ENCODE measurements at regions of chr1 and their contacts with region 1.

Region 1: GRCh38 chr1:15741183-15741850 is 982 bp upstream of the TMEM82 start:
- DNase-seq: peak; percentile 88
- H3K4me3 ChIP-seq: peak overlapping the region in 1 of 2 experiments; percentile 46; a peak in 1 of 4 replicates
- H3K27ac ChIP-seq: no peak overlapping the region
- H3K4me1 ChIP-seq: peaks cover 0 to 32% of the 10 kb centered on the region in 2 experiments; a peak in 1 of 4 replicates
- H3K27me3 ChIP-seq: no peaks in the 10 kb centered on the region
- CTCF ChIP-seq: peak; percentile 68
- EP300 ChIP-seq: no peak
- RAD21 ChIP-seq: peak; percentile 85

Region 2: GRCh38 chr1:15592285-15592684 is 149.0 kb before region 1 on chr1:
- CTCF ChIA-PET with region 1: interaction called, 14 read pairs
- POLR2A ChIA-PET with region 1: no interaction called
- DNase-seq: no peak
- H3K4me3 ChIP-seq: no peak overlapping the region
- H3K27ac ChIP-seq: no peak overlapping the region
- H3K4me1 ChIP-seq: no peaks in the 10 kb centered on the region
- H3K27me3 ChIP-seq: no peaks in the 10 kb centered on the region
- CTCF ChIP-seq: no peak
- EP300 ChIP-seq: no peak
- RAD21 ChIP-seq: no peak

Region 3: GRCh38 chr1:15685820-15686219 is 55.5 kb before region 1 on chr1:
- CTCF ChIA-PET with region 1: no interaction called
- POLR2A ChIA-PET with region 1: no interaction called
- DNase-seq: no peak
- H3K4me3 ChIP-seq: peak overlapping the region; percentile 74 to 84; a peak in 2 of 4 replicates
- H3K27ac ChIP-seq: no peak overlapping the region; a peak in 1 of 4 replicates
- H3K4me1 ChIP-seq: peaks cover 0 to 8% of the 10 kb centered on the region in 2 experiments; a peak in 2 of 4 replicates
- H3K27me3 ChIP-seq: no peaks in the 10 kb centered on the region
- CTCF ChIP-seq: no peak
- EP300 ChIP-seq: no peak
- RAD21 ChIP-seq: no peak

Region 4: DNA sequence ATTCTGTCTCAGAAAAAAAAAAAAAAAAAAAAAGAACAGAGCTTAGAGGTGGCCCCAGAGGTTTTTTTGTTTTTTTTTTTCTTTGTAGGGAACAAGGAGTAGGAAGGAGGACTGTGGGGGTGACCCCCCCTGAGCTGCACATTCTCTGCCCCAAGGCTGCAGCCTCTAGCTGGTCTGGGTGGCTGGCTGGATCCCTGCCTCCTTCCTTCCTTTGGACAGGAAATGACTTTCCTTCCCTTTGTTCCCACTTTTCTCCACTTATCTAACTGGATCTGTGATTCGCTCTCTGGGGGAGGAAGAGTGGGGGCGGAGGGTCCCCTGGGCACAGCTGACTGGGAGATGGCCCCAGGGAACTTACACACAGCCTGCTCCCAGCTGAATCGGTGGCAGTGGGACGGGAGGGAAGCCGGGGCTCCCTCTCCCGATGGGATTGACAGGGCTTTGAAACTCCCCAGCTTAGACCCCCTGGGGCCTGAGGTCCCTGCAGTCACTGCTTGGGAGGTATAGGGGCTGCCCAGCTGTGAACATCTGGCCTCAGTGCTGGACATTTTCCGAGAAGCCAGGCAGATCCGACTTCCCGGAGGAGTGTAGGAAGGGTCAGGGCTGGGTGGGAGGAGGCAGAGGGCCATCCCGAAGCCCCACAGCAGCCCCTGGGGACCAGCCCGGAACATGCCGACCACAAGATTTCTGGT is 19.3 kb after region 1 on chr1:
- CTCF ChIA-PET with region 1: interaction called, 12 read pairs
- POLR2A ChIA-PET with region 1: interaction called, 5 read pairs
- DNase-seq: peak; percentile 82
- H3K4me3 ChIP-seq: peak overlapping the region; percentile 40 to 82
- H3K27ac ChIP-seq: peak overlapping the region; percentile 70 to 84
- H3K4me1 ChIP-seq: peaks cover 28 to 44% of the 10 kb centered on the region in 2 experiments
- H3K27me3 ChIP-seq: no peaks in the 10 kb centered on the region
- CTCF ChIP-seq: no peak
- EP300 ChIP-seq: peak in 1 of 2 experiments; percentile 22; a peak in 1 of 4 replicates
- RAD21 ChIP-seq: peak; percentile 34; the same call in 1 of the 2 replicates

Region 5: GRCh38 chr1:15866721-15867201 is 125.4 kb after region 1 on chr1:
- CTCF ChIA-PET with region 1: no interaction called
- POLR2A ChIA-PET with region 1: no interaction called
- DNase-seq: no peak
- H3K4me3 ChIP-seq: no peak overlapping the region
- H3K27ac ChIP-seq: no peak overlapping the region
- H3K4me1 ChIP-seq: peaks cover 0 to 11% of the 10 kb centered on the region in 2 experiments; a peak in 2 of 4 replicates
- H3K27me3 ChIP-seq: no peaks in the 10 kb centered on the region
- CTCF ChIP-seq: no peak
- EP300 ChIP-seq: no peak
- RAD21 ChIP-seq: no peak

Region 6: GRCh38 chr1:15916417-15916816 is 175.1 kb after region 1 on chr1:
- CTCF ChIA-PET with region 1: no interaction called
- POLR2A ChIA-PET with region 1: no interaction called
- DNase-seq: no peak
- H3K4me3 ChIP-seq: peak overlapping the region in 1 of 2 experiments; percentile 19; a peak in 1 of 4 replicates
- H3K27ac ChIP-seq: peak overlapping the region; percentile 29 to 59; a peak in 2 of 4 replicates
- H3K4me1 ChIP-seq: peaks cover 4 to 34% of the 10 kb centered on the region in 2 experiments; a peak in 3 of 4 replicates
- H3K27me3 ChIP-seq: no peaks in the 10 kb centered on the region
- CTCF ChIP-seq: no peak
- EP300 ChIP-seq: no peak
- RAD21 ChIP-seq: no peak

Measured in SK-N-SH (cell line).